ENCODE measurements at regions of chr22 and their contacts with region 1.

Region 1: DNA sequence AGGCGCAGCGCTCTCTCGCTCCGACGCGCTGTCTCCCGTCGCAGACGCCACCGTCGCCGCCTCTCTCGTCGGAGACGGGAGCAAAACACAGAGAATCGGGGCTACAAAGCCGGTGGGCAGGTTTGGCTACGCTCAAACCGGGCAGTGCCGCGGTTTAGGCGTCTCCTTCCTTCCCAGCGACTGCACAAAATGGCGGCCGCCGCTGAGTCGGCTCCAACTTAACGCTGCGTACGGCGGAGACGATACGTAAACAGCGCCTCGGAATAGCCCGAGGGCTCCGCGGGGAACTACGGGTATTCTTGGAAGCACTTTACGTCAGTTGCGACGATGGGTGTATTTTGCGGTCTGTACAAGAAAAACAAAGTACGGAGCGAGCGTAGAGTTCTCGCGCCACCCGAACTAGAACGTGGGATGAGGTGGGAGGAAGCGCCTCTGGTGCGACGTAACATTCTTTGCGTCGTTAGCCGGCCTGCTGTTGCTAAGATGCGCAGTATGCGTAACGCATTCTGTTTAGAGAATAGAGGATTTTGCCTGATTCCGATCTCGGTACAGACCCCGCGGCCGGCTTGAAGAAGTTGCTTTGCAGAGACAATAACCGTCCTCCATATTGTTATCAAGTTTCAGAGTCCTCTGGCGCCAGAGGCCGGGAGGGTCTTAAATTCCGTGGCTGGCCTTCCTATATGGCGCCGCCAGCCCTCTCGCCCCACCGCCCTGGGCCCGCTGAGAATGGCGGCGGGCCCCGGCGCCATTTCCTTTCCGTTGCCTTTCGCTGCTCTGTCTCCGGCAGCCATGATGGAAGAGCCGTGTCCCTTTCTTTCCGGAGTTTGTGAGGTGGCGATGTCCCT is at the start of gene DDX17:
- DNase-seq: peak; percentile 77 to 97
- H3K4me3 ChIP-seq: peak within 1 kb of the TSS; percentile 77 to 96
- H3K27ac ChIP-seq: peak within 1 kb of the TSS; percentile 100
- H3K4me1 ChIP-seq: peaks cover 3 to 26% of the 10 kb centered on the region in 2 donors
- H3K27me3 ChIP-seq: no peaks in the 10 kb centered on the region
- CTCF ChIP-seq: no peak
- total RNA-seq, gene DDX17: 837 TPM

Region 2: GRCh38 chr22:38056969-38057891 is 449.1 kb before region 1 on chr22 and contains the start of gene PICK1:
- intact Hi-C with region 1: loop called (anchors 5 kb)
- DNase-seq: peak; percentile 85 to 97
- H3K4me3 ChIP-seq: peak within 1 kb of the TSS; percentile 65 to 70
- H3K27ac ChIP-seq: peak within 1 kb of the TSS; percentile 92 to 93
- H3K4me1 ChIP-seq: peaks cover 7 to 8% of the 10 kb centered on the region in 2 donors
- H3K27me3 ChIP-seq: no peaks in the 10 kb centered on the region
- CTCF ChIP-seq: no peak
- total RNA-seq, gene PICK1: 88.1 TPM

Region 3: DNA sequence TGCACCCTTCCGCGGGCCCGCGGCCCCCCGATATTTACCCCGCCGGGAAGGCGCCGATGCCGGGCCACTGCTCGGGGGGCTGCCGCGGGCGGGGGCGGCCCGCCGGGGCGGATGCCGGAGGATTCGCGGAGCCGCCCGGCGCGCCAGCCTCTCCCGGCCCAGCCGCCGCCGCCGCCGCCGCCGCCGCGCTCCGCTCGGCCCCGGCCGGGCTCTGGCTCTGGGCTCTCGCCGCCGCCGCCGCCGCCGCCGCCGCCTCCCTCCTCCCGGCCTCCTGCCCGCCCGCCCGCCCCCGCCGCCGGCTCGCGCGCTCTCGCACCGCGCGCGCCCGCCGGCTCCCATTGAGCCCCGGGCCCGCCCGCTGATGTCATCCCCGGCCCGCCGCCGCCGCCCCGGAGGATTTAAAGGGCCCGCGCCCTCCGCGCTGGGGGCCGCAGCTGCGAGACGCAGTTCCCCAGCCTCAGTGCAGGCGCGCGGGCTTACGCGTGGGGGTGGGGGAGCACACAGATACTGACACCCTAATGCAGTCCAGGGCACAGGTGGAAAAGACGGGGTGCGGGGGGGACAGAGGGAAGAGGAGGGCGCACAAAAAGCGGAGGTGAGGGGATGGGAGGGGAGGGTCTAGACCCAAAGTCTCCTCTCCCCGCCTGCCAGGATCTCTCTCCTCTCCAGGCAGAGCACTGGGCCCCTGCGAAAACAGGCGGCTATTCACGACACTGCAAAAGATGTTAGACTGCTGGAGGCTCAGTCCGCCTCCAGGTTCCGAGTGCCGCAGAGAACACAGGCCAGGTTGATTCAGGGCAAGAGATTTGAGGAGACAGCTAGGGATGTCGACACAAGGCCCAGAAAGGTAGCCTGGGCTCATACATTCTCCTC is 189.0 kb before region 1 on chr22 and contains the start of gene CSNK1E:
- intact Hi-C with region 1: loop called (anchors 5 kb)
- DNase-seq: peak; percentile 31 to 88
- H3K4me3 ChIP-seq: peak within 1 kb of the TSS; percentile 69 to 92
- H3K27ac ChIP-seq: peak within 1 kb of the TSS; percentile 97 to 100
- H3K4me1 ChIP-seq: peaks cover 10 to 37% of the 10 kb centered on the region in 2 donors
- H3K27me3 ChIP-seq: no peaks in the 10 kb centered on the region
- CTCF ChIP-seq: no peak
- total RNA-seq, gene CSNK1E: 185 TPM

Region 4: GRCh38 chr22:38398609-38399461 is 107.5 kb before region 1 on chr22:
- intact Hi-C with region 1: loop called (anchors 2 kb)
- DNase-seq: peak in 1 of 2 donors; percentile 85
- H3K4me3 ChIP-seq: peak overlapping the region; percentile 82 to 97
- H3K27ac ChIP-seq: peak overlapping the region; percentile 77 to 86
- H3K4me1 ChIP-seq: peaks cover 0 to 3% of the 10 kb centered on the region in 2 donors
- H3K27me3 ChIP-seq: no peaks in the 10 kb centered on the region
- CTCF ChIP-seq: no peak

Region 5: GRCh38 chr22:38467904-38468758 is 38.2 kb before region 1 on chr22 and contains the start of gene KDELR3:
- intact Hi-C with region 1: loop called (anchors 2 kb)
- DNase-seq: peak in 1 of 2 donors; percentile 87
- H3K4me3 ChIP-seq: peak within 1 kb of the TSS; percentile 63 to 82
- H3K27ac ChIP-seq: peak within 1 kb of the TSS in 1 of 2 donors; percentile 48
- H3K4me1 ChIP-seq: peaks cover 0 to 12% of the 10 kb centered on the region in 2 donors
- H3K27me3 ChIP-seq: no peaks in the 10 kb centered on the region
- CTCF ChIP-seq: no peak
- total RNA-seq, gene KDELR3: 11.8 TPM

Measured in ascending aorta (tissue), 2 donors.